ENCODE measurements at regions of chr11 and their contacts with region 1.

Region 1: GRCh38 chr11:12827929-12828812 is 153.9 kb downstream of the TEAD1 start:
- DNase-seq: peak; percentile 71
- H3K4me3 ChIP-seq: peak overlapping the region; percentile 23
- H3K27ac ChIP-seq: peak overlapping the region; percentile 85
- H3K4me1 ChIP-seq: no peaks in the 10 kb centered on the region
- H3K27me3 ChIP-seq: no peaks in the 10 kb centered on the region
- CTCF ChIP-seq: no peak

Region 2: DNA sequence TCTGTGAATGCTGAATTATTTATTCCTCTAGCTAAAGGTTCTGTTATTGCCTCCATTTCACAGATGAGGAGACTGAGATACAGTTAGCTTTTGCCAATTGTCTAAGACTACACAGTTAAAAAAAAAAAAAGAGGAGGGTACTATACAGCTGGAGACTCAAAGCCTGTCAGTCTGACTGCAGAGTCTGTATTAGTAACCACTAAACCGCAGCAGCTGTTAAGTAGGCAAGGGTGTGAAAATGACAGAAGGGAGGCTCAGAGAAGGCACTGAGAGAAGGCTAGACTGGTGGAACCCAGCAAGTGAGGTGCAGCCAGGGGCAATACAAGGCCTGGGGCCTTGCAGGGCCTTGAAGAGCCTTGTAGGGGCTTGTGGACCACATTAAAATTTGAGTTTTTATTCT is 1656.3 kb before region 1 on chr11:
- intact Hi-C with region 1: no loop called
- DNase-seq: no peak
- H3K4me3 ChIP-seq: no peak overlapping the region
- H3K27ac ChIP-seq: no peak overlapping the region
- H3K4me1 ChIP-seq: no peaks in the 10 kb centered on the region
- H3K27me3 ChIP-seq: no peaks in the 10 kb centered on the region
- CTCF ChIP-seq: no peak

Region 3: GRCh38 chr11:12868315-12869073 is 40.3 kb after region 1 on chr11:
- intact Hi-C with region 1: no loop called
- DNase-seq: no peak
- H3K4me3 ChIP-seq: no peak overlapping the region
- H3K27ac ChIP-seq: no peak overlapping the region
- H3K4me1 ChIP-seq: no peaks in the 10 kb centered on the region
- H3K27me3 ChIP-seq: no peaks in the 10 kb centered on the region
- CTCF ChIP-seq: no peak

Region 4: GRCh38 chr11:12888525-12889158 is 60.5 kb after region 1 on chr11:
- intact Hi-C with region 1: loop called (anchors 5 kb)
- DNase-seq: peak; percentile 86
- H3K4me3 ChIP-seq: no peak overlapping the region
- H3K27ac ChIP-seq: peak overlapping the region; percentile 8
- H3K4me1 ChIP-seq: no peaks in the 10 kb centered on the region
- H3K27me3 ChIP-seq: no peaks in the 10 kb centered on the region
- CTCF ChIP-seq: peak; percentile 62

Measured in colonic mucosa (tissue), 4 donors.